ENCODE measurements at regions of chr1 and their contacts with region 1.

Region 1: GRCh38 chr1:26279456-26280332 is at the start of gene SH3BGRL3:
- DNase-seq: peak; percentile 88
- ATAC-seq: peak; percentile 51
- H3K4me3 Mint-ChIP-seq: peak within 1 kb of the TSS; percentile 88
- H3K27ac Mint-ChIP-seq: peak within 1 kb of the TSS; percentile 99
- H3K4me1 Mint-ChIP-seq: peaks cover 83% of the 10 kb centered on the region
- H3K27me3 Mint-ChIP-seq: no peaks in the 10 kb centered on the region
- CTCF ChIP-seq: no peak
- total RNA-seq, gene SH3BGRL3: 309 to 316 TPM

Region 2: DNA sequence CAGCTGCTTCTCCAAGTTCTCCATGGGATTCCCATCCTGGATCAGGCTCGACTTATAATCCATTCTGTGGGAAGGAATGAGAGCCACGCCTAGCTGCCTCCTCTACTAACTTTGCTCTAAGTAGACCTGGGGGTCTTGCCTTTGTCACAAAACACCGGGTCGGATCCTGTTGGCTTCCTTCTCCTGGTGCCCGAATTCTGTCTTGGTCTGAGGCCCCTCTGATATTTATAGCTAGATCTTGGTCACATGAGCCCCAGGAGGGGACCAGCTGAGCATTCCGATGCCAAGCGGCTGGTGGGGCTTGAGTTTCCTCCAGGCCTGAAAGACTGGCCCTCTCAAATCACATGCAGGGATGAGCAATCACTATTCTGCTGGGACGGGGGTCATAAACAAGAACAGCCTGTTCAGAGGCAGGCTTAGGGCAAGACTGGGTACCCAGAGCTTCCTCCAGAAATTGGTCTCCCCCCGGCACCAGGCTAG is 212.2 kb before region 1 on chr1 and contains the start of gene TRIM63:
- CTCF ChIA-PET with region 1: no interaction called
- POLR2A ChIA-PET with region 1: no interaction called
- intact Hi-C with region 1: no loop called
- DNase-seq: no peak
- ATAC-seq: no peak
- H3K4me3 Mint-ChIP-seq: no peak within 1 kb of the TSS
- H3K27ac Mint-ChIP-seq: no peak within 1 kb of the TSS
- H3K4me1 Mint-ChIP-seq: no peaks in the 10 kb centered on the region
- H3K27me3 Mint-ChIP-seq: peaks cover 6% of the 10 kb centered on the region
- CTCF ChIP-seq: no peak
- total RNA-seq, gene TRIM63: 0.18 TPM in 1 of 2 experiments, not detected in the other

Region 3: DNA sequence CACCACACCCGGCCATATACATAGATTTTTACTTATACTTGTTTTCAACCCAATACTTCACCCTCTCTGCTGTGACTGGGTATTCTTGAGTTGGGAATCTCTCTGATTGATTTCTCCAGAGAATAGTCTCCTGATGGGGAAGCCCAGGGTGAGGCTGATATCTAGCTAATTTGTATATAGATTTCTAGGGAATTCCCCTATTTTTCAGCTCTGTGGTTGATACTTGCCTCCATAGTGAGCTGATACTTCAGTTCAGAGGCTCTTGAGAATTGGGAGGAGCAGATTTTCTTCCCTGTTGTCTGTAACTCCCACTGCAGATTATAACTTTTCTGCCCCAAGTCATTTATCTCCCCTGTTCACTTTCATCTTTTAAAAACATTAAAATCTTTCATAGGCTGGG is 14.3 kb before region 1 on chr1:
- CTCF ChIA-PET with region 1: interaction called, 41 read pairs
- POLR2A ChIA-PET with region 1: interaction called, 3 read pairs
- intact Hi-C with region 1: no loop called
- DNase-seq: no peak
- ATAC-seq: peak; percentile 39
- H3K4me3 Mint-ChIP-seq: no peak overlapping the region
- H3K27ac Mint-ChIP-seq: peak overlapping the region; percentile 3
- H3K4me1 Mint-ChIP-seq: peaks cover 7% of the 10 kb centered on the region
- H3K27me3 Mint-ChIP-seq: no peaks in the 10 kb centered on the region
- CTCF ChIP-seq: no peak

Region 4: GRCh38 chr1:26290882-26291261 is 11.2 kb after region 1 on chr1:
- CTCF ChIA-PET with region 1: interaction called, 79 read pairs
- POLR2A ChIA-PET with region 1: interaction called, 53 read pairs
- intact Hi-C with region 1: no loop called
- DNase-seq: no peak
- ATAC-seq: no peak
- H3K4me3 Mint-ChIP-seq: no peak overlapping the region
- H3K27ac Mint-ChIP-seq: peak overlapping the region; percentile 98
- H3K4me1 Mint-ChIP-seq: peaks cover 64% of the 10 kb centered on the region
- H3K27me3 Mint-ChIP-seq: no peaks in the 10 kb centered on the region
- CTCF ChIP-seq: no peak

Region 5: GRCh38 chr1:26306290-26307229 is 26.9 kb after region 1 on chr1 and contains the start of gene UBXN11:
- CTCF ChIA-PET with region 1: interaction called, 46 read pairs
- POLR2A ChIA-PET with region 1: interaction called, 77 read pairs
- intact Hi-C with region 1: no loop called
- DNase-seq: peak; percentile 98
- ATAC-seq: peak; percentile 98
- H3K4me3 Mint-ChIP-seq: peak within 1 kb of the TSS; percentile 86
- H3K27ac Mint-ChIP-seq: peak within 1 kb of the TSS; percentile 93
- H3K4me1 Mint-ChIP-seq: peaks cover 22% of the 10 kb centered on the region
- H3K27me3 Mint-ChIP-seq: no peaks in the 10 kb centered on the region
- CTCF ChIP-seq: no peak
- total RNA-seq, gene UBXN11: 24.9 to 26.0 TPM

Region 6: DNA sequence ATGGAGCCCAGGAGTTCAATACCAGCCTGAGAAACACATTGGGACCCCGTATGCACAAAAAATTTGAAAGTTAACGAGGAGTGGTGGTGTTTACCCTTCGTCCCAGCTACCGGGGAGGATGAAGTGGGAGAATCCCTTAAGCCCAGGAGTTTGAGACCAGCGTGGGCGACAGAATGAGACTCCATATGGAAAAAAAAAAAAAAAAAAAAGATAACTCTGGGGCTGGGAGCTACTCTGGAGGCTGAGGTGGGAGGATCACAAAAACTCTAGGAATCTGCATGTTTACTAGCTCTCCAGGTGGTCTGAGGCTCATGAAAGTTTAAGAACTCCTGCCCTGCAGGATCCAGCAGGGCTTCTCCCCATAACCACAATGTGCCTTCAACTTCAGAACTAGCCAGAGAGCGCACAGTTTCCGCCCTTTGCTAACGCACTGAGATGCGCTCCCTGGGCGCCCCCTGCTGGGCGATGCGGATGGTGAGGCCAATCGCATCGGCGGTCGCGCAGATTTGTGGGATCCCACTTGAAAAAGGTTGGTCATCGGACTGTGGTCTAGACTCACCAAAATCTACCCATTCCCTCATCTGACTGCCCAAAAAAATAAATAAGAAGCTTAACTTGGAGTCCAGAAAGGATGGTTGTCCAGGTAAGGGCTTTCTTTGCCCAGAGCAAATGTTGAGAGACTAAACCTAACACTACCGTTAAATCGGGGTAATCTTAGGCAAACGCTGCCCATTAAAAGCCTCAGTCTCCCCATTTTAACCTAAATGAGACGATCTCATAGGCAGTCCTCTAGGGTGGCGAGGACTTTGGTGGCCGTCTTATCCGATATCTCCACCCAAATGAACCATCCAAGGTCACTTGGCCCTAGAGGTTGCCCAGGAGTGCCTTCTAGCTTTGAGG is 84.1 kb after region 1 on chr1:
- CTCF ChIA-PET with region 1: interaction called, 38 read pairs
- POLR2A ChIA-PET with region 1: interaction called, 3 read pairs
- intact Hi-C with region 1: no loop called
- DNase-seq: peak; percentile 94
- ATAC-seq: peak; percentile 70
- H3K4me3 Mint-ChIP-seq: no peak overlapping the region
- H3K27ac Mint-ChIP-seq: no peak overlapping the region
- H3K4me1 Mint-ChIP-seq: peaks cover 43% of the 10 kb centered on the region
- H3K27me3 Mint-ChIP-seq: peaks cover 17% of the 10 kb centered on the region
- CTCF ChIP-seq: peak; percentile 98

Region 7: DNA sequence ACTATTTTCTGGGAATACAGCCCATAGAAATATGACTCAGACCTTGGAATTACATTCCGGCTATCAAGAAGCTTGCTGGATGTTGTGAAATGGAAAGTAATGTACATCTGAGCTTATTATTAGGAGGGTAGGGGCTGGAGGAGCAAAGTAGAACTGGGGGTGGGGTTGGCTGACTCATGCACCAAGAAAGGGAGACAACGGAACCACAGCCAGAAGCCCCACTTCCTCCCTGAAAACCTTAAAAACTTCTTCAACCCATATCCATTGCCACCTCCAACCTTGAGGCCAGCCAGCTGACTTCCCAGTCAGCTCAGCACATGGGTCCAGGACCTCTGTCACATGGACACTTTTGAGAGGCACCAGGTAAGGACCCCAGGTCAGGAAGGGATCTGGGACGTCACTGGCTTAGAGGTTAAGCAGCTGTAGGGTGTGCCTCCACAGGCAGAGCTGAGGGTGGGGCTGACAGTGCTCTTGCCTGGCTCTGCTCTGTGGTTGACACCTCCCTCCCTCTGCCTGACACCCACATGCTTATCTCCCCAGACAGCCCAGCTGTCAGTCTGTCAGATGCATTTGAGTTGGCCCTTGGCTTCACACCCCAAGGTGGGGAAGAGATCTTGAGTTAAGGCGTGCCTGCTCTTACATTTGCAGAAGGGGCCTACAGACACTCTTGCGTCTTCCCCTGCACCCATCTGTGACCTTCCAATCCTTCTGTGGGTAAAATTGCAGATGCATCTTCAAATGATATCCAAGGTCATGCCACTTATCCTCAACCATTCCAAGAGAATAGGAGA is 98.6 kb after region 1 on chr1:
- CTCF ChIA-PET with region 1: interaction called, 15 read pairs
- POLR2A ChIA-PET with region 1: interaction called, 3 read pairs
- intact Hi-C with region 1: no loop called
- DNase-seq: peak; percentile 91
- ATAC-seq: peak; percentile 96
- H3K4me3 Mint-ChIP-seq: peak overlapping the region; percentile 33
- H3K27ac Mint-ChIP-seq: peak overlapping the region; percentile 82
- H3K4me1 Mint-ChIP-seq: peaks cover 59% of the 10 kb centered on the region
- H3K27me3 Mint-ChIP-seq: no peaks in the 10 kb centered on the region
- CTCF ChIP-seq: no peak

Region 8: DNA sequence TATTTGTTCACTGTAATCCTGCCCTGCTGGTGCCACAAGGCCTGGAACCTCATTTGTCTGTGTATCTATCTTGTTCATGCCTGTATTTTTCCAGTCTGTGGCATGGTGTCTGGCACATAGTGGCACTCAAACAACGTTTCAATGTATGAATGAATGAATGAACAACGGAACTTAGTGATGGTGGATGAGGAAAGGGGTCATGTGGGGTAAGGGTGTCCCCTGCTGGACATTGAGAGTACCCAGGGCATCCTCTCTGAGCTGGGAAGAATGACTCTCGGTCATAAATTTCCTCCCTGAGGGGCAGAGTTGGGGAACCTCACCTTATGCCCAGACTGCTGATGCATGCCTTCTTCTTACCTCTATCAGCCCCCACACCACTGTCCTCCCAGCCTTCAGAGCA is 111.8 kb after region 1 on chr1:
- CTCF ChIA-PET with region 1: interaction called, 11 read pairs
- POLR2A ChIA-PET with region 1: no interaction called
- intact Hi-C with region 1: loop called (anchors 5 kb)
- DNase-seq: peak; percentile 71
- ATAC-seq: peak; percentile 69
- H3K4me3 Mint-ChIP-seq: no peak overlapping the region
- H3K27ac Mint-ChIP-seq: no peak overlapping the region
- H3K4me1 Mint-ChIP-seq: peaks cover 40% of the 10 kb centered on the region
- H3K27me3 Mint-ChIP-seq: no peaks in the 10 kb centered on the region
- CTCF ChIP-seq: peak; percentile 82

Measured in activated CD8-positive, alpha-beta T cell treated with anti-CD3 and anti-CD28 coated beads for 36 hours (primary cell).